ENCODE measurements at regions of chr7 and their contacts with region 1.

Region 1: GRCh38 chr7:155738652-155739537 is 73.4 kb downstream of the SHH start:
- DNase-seq: peak; percentile 75
- H3K4me3 ChIP-seq: no peak overlapping the region
- H3K27ac ChIP-seq: no peak overlapping the region
- H3K4me1 ChIP-seq: no peaks in the 10 kb centered on the region
- H3K27me3 ChIP-seq: no peaks in the 10 kb centered on the region
- CTCF ChIP-seq: peak; percentile 41 to 58
- POLR2A ChIP-seq: no peak

Region 2: GRCh38 chr7:155713384-155713783 is 25.5 kb before region 1 on chr7:
- CTCF ChIA-PET with region 1: no interaction called
- POLR2A ChIA-PET with region 1: no interaction called
- dilution Hi-C with region 1: no loop called
- intact Hi-C with region 1: no loop called
- DNase-seq: no peak
- H3K4me3 ChIP-seq: no peak overlapping the region
- H3K27ac ChIP-seq: no peak overlapping the region
- H3K4me1 ChIP-seq: no peaks in the 10 kb centered on the region
- H3K27me3 ChIP-seq: no peaks in the 10 kb centered on the region
- CTCF ChIP-seq: no peak
- POLR2A ChIP-seq: no peak

Region 3: GRCh38 chr7:155769701-155770100 is 30.8 kb after region 1 on chr7:
- CTCF ChIA-PET with region 1: interaction called, 3 read pairs
- POLR2A ChIA-PET with region 1: no interaction called
- dilution Hi-C with region 1: no loop called
- intact Hi-C with region 1: loop called (anchors 2 kb)
- DNase-seq: no peak
- H3K4me3 ChIP-seq: no peak overlapping the region
- H3K27ac ChIP-seq: no peak overlapping the region
- H3K4me1 ChIP-seq: peaks cover under 1% of the 10 kb centered on the region
- H3K27me3 ChIP-seq: no peaks in the 10 kb centered on the region
- CTCF ChIP-seq: no peak
- POLR2A ChIP-seq: no peak